Caco-2 (cell line): ENCODE measurements at regions of chr1 and their contacts with region 1.

Region 1: GRCh38 chr1:197339106-197340060 is 71.3 kb downstream of the CRB1 start:
- DNase-seq: no peak
- H3K4me3 ChIP-seq: no peak overlapping the region
- H3K4me3 Mint-ChIP-seq: no peak overlapping the region
- H3K27ac Mint-ChIP-seq: no peak overlapping the region
- H3K4me1 ChIP-seq: no peaks in the 10 kb centered on the region
- H3K4me1 Mint-ChIP-seq: peaks cover 10% of the 10 kb centered on the region
- H3K27me3 ChIP-seq: no peaks in the 10 kb centered on the region
- H3K27me3 Mint-ChIP-seq: peaks cover 6% of the 10 kb centered on the region
- CTCF ChIP-seq: no peak

Region 2: GRCh38 chr1:197224160-197224559 is 115.2 kb before region 1 on chr1:
- CTCF ChIA-PET with region 1: no interaction called
- POLR2A ChIA-PET with region 1: no interaction called
- intact Hi-C with region 1: loop called (anchors 1 kb)
- DNase-seq: no peak
- H3K4me3 ChIP-seq: no peak overlapping the region
- H3K4me3 Mint-ChIP-seq: no peak overlapping the region
- H3K27ac Mint-ChIP-seq: no peak overlapping the region
- H3K4me1 ChIP-seq: no peaks in the 10 kb centered on the region
- H3K4me1 Mint-ChIP-seq: peaks cover 6% of the 10 kb centered on the region
- H3K27me3 ChIP-seq: no peaks in the 10 kb centered on the region
- H3K27me3 Mint-ChIP-seq: no peaks in the 10 kb centered on the region
- CTCF ChIP-seq: no peak